ENCODE measurements at regions of chr5 and their contacts with region 1.

Region 1: GRCh38 chr5:45402804-45403455 is 293.2 kb downstream of the HCN1 start:
- DNase-seq: peak; percentile 70
- H3K4me3 ChIP-seq: no peak overlapping the region
- H3K27ac ChIP-seq: peak overlapping the region; percentile 38
- H3K4me1 ChIP-seq: peaks cover 35% of the 10 kb centered on the region
- H3K27me3 ChIP-seq: no peaks in the 10 kb centered on the region
- CTCF ChIP-seq: no peak

Region 2: DNA sequence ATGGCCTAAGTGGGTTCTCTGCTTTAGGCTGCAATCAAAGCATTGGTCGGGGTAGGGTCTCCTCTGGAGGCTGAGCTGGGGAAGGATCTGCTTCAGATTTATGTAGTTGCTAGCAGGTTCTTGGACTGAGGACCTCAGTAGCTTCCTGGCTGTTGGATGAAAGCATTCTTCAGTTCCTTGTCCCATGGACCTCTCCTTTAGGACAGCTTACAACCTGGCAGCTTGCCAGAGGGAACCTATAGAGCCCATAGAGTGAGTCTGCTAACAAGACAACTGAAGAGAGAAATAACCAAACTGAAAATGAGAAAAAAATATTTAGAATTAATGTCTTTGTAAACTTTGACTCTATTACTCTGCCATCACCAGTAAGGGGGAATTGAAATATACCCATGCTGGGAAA is 581.8 kb before region 1 on chr5:
- CTCF ChIA-PET with region 1: no interaction called
- POLR2A ChIA-PET with region 1: no interaction called
- intact Hi-C with region 1: loop called (anchors 10 kb)
- DNase-seq: peak; percentile 5
- H3K4me3 ChIP-seq: no peak overlapping the region
- H3K27ac ChIP-seq: no peak overlapping the region
- H3K4me1 ChIP-seq: peaks cover 8% of the 10 kb centered on the region
- H3K27me3 ChIP-seq: no peaks in the 10 kb centered on the region
- CTCF ChIP-seq: no peak

Region 3: DNA sequence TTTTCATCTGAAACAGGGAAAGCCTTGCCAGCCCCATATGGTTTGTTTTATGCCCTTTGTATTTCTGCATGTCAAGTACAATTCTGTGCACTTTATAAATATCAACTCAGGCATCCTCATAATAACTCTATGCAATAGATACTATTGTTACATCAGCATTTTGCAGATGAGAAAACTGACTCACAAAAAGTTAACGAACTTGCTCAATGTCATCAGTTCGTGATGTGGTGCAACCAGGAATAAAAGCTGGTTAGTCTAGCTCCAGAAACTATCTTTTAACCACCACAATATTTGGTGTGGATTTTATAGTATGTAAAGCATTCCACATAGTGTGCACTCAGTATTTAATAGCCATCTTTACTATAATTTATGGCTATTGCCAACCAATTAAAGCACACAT is 459.3 kb before region 1 on chr5:
- CTCF ChIA-PET with region 1: no interaction called
- POLR2A ChIA-PET with region 1: no interaction called
- intact Hi-C with region 1: loop called (anchors 10 kb)
- DNase-seq: no peak
- H3K4me3 ChIP-seq: no peak overlapping the region
- H3K27ac ChIP-seq: peak overlapping the region; percentile 30
- H3K4me1 ChIP-seq: peaks cover 31% of the 10 kb centered on the region
- H3K27me3 ChIP-seq: no peaks in the 10 kb centered on the region
- CTCF ChIP-seq: no peak